MCF 10A (cell line): ENCODE measurements at regions of chr6 and their contacts with region 1.

Region 1: DNA sequence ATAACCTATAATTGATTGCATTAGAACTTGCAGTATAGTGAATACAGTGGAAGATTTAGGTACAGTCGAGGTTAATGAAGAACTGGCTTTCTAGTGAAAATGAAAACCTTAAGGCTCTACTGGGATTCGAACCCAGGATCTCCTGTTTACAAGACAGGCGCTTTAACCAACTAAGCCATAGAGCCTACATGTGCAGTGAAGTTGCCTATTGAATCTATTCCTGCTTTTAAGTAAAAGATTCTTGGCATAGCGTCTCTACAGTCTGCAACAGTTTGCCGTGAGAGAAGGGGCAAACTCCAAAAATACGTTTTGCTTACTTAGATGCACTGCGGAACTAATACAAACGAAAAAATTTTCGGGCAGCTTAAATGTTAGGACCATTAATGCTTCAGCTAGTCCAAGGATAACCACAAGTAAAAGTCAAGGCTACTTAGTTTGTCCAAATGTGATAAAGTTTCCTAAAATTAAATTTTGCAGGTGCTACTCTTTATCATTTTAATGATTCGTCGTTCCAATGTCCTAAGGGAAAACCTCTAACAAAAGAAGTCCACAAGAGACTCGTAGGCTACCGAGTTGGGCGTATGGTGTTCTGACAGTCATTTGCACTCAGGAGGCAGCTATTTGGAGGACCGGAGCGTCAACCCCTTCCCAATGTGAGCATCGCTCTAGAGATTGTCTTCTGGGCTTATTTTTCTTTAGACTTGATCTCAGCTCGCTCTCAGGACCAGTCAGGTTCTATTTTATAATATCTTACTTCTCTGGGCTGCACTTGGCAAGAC is 31.3 kb upstream of the ZSCAN23 start:
- DNase-seq: peak; percentile 83
- H3K4me3 Mint-ChIP-seq: peak overlapping the region; percentile 76
- H3K27ac Mint-ChIP-seq: no peak overlapping the region
- H3K4me1 Mint-ChIP-seq: no peaks in the 10 kb centered on the region
- H3K27me3 Mint-ChIP-seq: peaks cover 10% of the 10 kb centered on the region
- CTCF ChIP-seq: no peak

Region 2: GRCh38 chr6:28489366-28490204 is 15.0 kb after region 1 on chr6:
- CTCF ChIA-PET with region 1: interaction called, 5 read pairs
- POLR2A ChIA-PET with region 1: interaction called, 11 read pairs
- intact Hi-C with region 1: no loop called
- DNase-seq: peak; percentile 88
- H3K4me3 Mint-ChIP-seq: peak overlapping the region; percentile 86
- H3K27ac Mint-ChIP-seq: peak overlapping the region; percentile 97
- H3K4me1 Mint-ChIP-seq: peaks cover 5% of the 10 kb centered on the region
- H3K27me3 Mint-ChIP-seq: no peaks in the 10 kb centered on the region
- CTCF ChIP-seq: no peak